PC-3 (cell line): ENCODE measurements at regions of chrX and their contacts with region 1.

Region 1: DNA sequence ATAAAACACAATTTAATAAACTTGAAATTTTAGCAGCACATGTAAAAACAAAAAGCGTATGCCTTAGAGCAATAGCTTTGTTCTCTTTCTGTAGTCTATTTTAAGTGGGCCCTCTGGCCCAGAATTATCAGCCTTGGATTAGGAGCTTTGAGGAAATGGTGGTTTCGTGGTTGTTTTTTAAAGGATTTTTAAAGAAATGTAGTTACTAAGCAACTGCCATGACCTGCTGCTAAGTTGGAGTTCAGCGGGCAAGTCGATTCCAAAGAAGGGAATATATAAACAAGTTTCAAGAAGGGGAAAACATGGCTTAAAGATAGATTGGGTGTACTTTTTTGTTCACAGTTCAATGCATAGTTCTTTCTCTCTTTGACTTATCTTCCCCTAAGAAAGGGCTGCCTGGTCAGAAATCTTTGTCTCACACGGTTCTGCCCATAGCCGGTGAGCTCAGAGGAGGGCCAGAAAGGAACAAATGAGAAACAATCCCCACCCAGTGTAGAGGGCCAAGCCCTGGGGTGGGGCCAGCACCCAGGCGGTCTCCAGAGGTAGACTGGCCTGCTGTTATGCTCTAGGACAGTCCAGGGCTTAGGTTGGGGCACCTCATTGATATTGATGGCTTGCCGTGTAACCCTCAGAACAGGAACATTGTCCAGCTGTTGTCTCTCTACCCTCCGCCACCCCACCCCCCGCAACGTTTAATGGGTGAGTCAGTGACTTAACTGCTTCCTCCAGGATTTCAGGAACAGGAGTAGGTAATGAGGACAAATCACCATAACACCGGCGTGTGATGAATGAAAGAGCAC is 32.5 kb downstream of the DLG3 start:
- DNase-seq: peak; percentile 79
- ATAC-seq: peak; percentile 68
- H3K4me3 ChIP-seq: peak overlapping the region; percentile 43
- H3K27ac ChIP-seq: peak overlapping the region; percentile 99
- H3K4me1 ChIP-seq: peaks cover 60% of the 10 kb centered on the region
- H3K27me3 ChIP-seq: no peaks in the 10 kb centered on the region
- CTCF ChIP-seq: no peak

Region 2: GRCh38 chrX:70664726-70665125 is 187.6 kb after region 1 on chrX:
- CTCF ChIA-PET with region 1: interaction called, 18 read pairs
- POLR2A ChIA-PET with region 1: interaction called, 6 read pairs
- intact Hi-C with region 1: no loop called
- DNase-seq: peak; percentile 49
- ATAC-seq: peak; percentile 50
- H3K4me3 ChIP-seq: no peak overlapping the region
- H3K27ac ChIP-seq: no peak overlapping the region
- H3K4me1 ChIP-seq: no peaks in the 10 kb centered on the region
- H3K27me3 ChIP-seq: peaks cover 16% of the 10 kb centered on the region
- CTCF ChIP-seq: peak; percentile 58; the same call in 1 of the 2 replicates